ENCODE measurements at regions of chr17 and their contacts with region 1.

Region 1: GRCh38 chr17:27332485-27333409 is 38.8 kb downstream of the WSB1 start:
- DNase-seq: peak; percentile 98
- ATAC-seq: peak; percentile 95
- H3K4me3 ChIP-seq: peak overlapping the region; percentile 39 to 73 (median 63)
- H3K27ac ChIP-seq: peak overlapping the region; percentile 88
- H3K4me1 ChIP-seq: peaks cover 43% of the 10 kb centered on the region
- H3K27me3 ChIP-seq: no peaks in the 10 kb centered on the region
- CTCF ChIP-seq: peak; percentile 99
- EP300 ChIP-seq: peak; percentile 34 to 45; a peak in 3 of 4 replicates
- POLR2A ChIP-seq: peak; percentile 40 to 49; a peak in 3 of 4 replicates
- RAD21 ChIP-seq: peak; percentile 99

Region 2: DNA sequence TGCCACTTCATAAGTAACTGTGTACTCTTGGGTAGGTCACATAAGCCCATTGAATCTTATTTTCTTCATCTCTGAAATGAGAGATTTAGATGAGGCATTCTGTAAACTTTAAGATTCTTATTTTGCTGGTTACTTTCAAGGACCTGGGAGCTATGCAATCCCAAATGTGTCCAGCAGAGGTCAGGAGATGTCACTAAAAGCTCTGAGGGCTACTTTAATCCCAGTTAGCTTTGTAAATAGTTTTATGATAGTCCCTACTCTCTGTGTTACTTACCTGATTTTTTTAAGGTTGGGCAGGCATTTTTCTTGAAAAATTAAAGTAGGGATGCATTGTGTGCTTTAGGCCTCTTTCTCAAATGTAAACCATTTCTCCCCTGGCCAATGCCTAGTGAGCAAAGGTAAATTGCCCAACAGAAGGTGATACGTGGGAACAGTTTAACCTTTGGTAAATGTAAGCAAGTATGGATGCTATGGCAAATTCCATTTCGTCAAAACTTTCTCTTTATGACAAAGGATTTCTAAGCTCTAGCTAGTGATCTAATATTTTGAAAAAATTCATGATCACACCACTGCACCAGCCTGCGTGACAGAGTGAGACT is 95.9 kb before region 1 on chr17:
- CTCF ChIA-PET with region 1: interaction called, 41 read pairs
- POLR2A ChIA-PET with region 1: interaction called, 12 read pairs
- in situ Hi-C with region 1: no loop called
- intact Hi-C with region 1: loop called (anchors 1 kb)
- DNase-seq: peak; percentile 63
- ATAC-seq: peak; percentile 60; the same call in 2 of the 3 replicates
- H3K4me3 ChIP-seq: no peak overlapping the region
- H3K27ac ChIP-seq: no peak overlapping the region
- H3K4me1 ChIP-seq: peaks cover 19% of the 10 kb centered on the region
- H3K27me3 ChIP-seq: peaks cover 2 to 24% of the 10 kb centered on the region in 2 experiments; a peak in 3 of 5 replicates
- CTCF ChIP-seq: peak; percentile 74
- EP300 ChIP-seq: no peak
- POLR2A ChIP-seq: no peak
- RAD21 ChIP-seq: peak; percentile 66

Region 3: DNA sequence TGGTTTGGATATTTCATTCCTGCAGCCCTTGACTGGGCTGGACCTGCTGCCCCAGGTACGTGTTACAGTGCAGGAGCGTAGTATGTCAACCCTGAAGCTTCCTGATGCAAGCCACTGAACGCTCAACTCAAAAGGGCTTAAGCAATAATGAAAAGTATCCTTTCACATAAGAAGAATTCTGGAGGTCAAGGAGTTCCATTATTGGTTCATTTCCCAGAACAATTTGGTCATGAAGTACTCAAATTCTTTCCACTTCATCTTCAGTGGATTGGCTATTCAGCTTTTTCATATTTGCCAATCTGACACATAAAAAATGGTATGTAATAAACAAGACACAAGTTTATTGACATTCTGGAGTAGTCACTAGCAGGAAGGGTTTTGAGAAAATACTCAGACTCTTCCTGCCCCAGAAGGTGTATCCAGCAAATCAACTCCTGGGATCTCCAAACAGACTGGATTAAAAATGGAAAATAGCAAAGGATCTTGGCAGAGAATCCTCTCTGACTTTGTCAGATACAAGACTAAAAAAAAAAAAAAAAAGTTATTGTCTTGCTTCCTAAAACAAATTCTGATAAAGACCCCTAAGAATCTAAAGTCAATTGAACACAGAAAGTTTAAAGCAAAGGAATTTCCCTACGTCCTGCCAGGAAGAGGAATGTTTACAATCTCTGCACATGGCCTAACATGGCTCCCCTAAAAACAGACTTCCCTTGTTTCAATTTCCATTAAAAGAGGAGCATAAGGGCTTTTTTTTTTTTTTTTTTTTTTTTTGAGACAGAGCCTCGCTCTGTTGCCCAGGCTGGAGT is 76.3 kb before region 1 on chr17:
- CTCF ChIA-PET with region 1: no interaction called
- POLR2A ChIA-PET with region 1: no interaction called
- in situ Hi-C with region 1: no loop called
- intact Hi-C with region 1: loop called (anchors 2 kb)
- DNase-seq: peak; percentile 72
- ATAC-seq: peak; percentile 44; the same call in 2 of the 3 replicates
- H3K4me3 ChIP-seq: peak overlapping the region in 1 of 3 experiments; percentile 6; a peak in 2 of 6 replicates
- H3K27ac ChIP-seq: no peak overlapping the region
- H3K4me1 ChIP-seq: peaks cover 27% of the 10 kb centered on the region
- H3K27me3 ChIP-seq: peaks cover 0 to 2% of the 10 kb centered on the region in 2 experiments; a peak in 1 of 5 replicates
- CTCF ChIP-seq: no peak
- EP300 ChIP-seq: no peak
- POLR2A ChIP-seq: no peak
- RAD21 ChIP-seq: no peak

Region 4: GRCh38 chr17:27353461-27354050 is 20.8 kb after region 1 on chr17:
- CTCF ChIA-PET with region 1: interaction called, 4 read pairs
- POLR2A ChIA-PET with region 1: interaction called, 7 read pairs
- in situ Hi-C with region 1: no loop called
- intact Hi-C with region 1: loop called (anchors 1 kb)
- DNase-seq: peak; percentile 87
- ATAC-seq: peak; percentile 96
- H3K4me3 ChIP-seq: peak overlapping the region; percentile 76 to 94 (median 82)
- H3K27ac ChIP-seq: peak overlapping the region; percentile 75
- H3K4me1 ChIP-seq: peaks cover 23% of the 10 kb centered on the region
- H3K27me3 ChIP-seq: peaks cover 0 to 1% of the 10 kb centered on the region in 2 experiments; a peak in 2 of 5 replicates
- CTCF ChIP-seq: peak; percentile 75
- EP300 ChIP-seq: peak; percentile 11 to 21; a peak in 1 of 4 replicates
- POLR2A ChIP-seq: peak; percentile 68 to 87; a peak in 3 of 4 replicates
- RAD21 ChIP-seq: peak; percentile 93

Region 5: GRCh38 chr17:27578718-27579085 is 246.0 kb after region 1 on chr17:
- CTCF ChIA-PET with region 1: no interaction called
- POLR2A ChIA-PET with region 1: no interaction called
- in situ Hi-C with region 1: no loop called
- intact Hi-C with region 1: loop called (anchors 10 kb)
- DNase-seq: peak; percentile 45
- ATAC-seq: peak; percentile 67
- H3K4me3 ChIP-seq: no peak overlapping the region
- H3K27ac ChIP-seq: no peak overlapping the region
- H3K4me1 ChIP-seq: peaks cover 68% of the 10 kb centered on the region
- H3K27me3 ChIP-seq: no peaks in the 10 kb centered on the region
- CTCF ChIP-seq: peak; percentile 22; the same call in 1 of the 2 replicates
- EP300 ChIP-seq: no peak
- POLR2A ChIP-seq: no peak
- RAD21 ChIP-seq: no peak

Measured in HepG2 (cell line).